Dendritic cell treated with granulocyte-macrophage colony-stimulating factor and Interleukin-4, amounts not matched to agents 40 ng/mL and 50 ng/mL, for 4 days (primary cell): ENCODE measurements at regions of chr15 and their contacts with region 1.

Region 1: DNA sequence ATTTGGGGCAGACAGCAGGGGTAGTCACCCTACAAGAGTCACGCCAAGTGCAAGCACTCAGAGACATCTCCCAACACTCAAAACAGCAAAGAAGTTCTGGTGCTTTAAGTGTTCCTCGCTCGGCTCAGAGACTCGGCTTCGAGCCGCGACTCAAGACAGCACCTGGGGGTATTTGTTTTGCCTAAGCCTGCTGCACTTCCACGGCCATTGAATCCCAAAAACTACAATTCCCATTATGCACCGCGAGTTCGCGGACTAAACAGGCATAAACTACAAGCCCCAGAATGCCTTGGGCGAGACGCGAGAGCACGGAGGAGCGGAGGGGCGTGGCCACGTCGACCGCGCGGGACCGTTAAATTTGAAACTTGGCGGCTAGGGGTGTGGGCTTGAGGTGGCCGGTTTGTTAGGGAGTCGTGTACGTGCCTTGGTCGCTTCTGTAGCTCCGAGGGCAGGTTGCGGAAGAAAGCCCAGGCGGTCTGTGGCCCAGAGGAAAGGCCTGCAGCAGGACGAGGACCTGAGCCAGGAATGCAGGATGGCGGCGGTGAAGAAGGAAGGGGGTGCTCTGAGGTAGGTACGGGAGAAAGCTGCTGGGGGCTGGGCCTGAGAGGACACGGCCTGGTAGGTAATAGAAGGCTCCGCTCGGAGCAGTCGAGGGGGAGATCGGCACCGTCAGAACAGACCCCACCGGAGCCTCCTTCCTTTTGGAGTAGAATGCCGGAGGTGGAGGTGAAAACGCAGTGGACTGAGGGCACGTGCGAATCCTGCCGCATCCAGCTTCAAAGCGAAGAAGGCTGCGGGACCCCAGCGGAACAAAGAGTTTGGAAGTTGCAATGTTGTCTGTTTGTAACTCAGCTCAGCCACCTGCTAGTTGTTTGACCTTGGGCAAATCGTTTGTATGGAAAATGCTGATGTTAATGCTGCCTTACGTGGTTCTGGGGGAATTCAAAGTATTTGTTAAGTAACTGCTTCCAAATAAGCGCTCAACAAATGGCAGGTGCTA is at the start of gene BUB1B:
- H3K4me3 Mint-ChIP-seq: no peak within 1 kb of the TSS
- H3K27ac Mint-ChIP-seq: no peak within 1 kb of the TSS
- H3K4me1 Mint-ChIP-seq: peaks cover 17% of the 10 kb centered on the region
- H3K27me3 Mint-ChIP-seq: no peaks in the 10 kb centered on the region

Region 2: DNA sequence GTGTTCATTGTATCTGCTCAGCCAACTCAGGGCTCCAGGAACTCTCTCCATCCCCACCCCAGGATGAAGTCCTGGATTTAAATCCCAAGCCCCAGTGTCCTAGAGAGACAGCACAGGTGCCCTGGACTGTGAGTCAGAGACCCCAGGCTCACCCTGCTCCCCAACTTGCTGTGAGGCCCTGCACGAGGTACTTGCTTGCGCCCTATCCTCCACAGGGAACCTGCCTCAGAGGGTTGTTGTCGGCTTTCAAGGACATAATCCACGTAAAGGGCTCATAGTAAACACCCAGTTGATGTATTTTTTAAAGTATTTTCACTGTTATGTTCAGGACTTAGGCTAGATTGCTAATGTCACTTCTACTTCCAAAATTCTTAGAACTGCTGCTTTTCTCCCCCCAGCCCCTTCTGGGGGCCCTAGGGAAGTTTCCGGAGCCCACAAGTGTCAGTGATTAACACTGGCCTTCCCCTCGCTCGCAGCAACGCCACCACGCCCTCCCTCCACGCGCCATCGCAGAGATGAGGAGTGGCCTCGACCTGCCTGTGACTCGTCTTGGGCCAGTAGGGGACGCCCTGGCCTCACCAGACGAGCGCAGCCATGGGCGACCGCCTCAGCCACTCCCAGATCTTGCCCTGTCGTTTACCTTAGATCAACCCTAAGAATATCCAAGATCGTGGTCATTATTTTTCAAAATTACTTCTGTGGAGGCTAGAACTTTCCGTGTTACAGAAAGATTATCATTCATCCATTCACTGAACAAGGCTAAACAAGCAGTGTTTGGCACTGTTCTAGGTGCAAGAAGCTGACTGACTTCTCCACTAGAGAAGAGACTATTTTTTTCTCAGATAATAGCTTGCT is 116.0 kb before region 1 on chr15:
- intact Hi-C with region 1: loop called (anchors 5 kb)
- H3K4me3 Mint-ChIP-seq: peak overlapping the region; percentile 70
- H3K27ac Mint-ChIP-seq: peak overlapping the region; percentile 74
- H3K4me1 Mint-ChIP-seq: peaks cover 61% of the 10 kb centered on the region
- H3K27me3 Mint-ChIP-seq: no peaks in the 10 kb centered on the region

Region 3: DNA sequence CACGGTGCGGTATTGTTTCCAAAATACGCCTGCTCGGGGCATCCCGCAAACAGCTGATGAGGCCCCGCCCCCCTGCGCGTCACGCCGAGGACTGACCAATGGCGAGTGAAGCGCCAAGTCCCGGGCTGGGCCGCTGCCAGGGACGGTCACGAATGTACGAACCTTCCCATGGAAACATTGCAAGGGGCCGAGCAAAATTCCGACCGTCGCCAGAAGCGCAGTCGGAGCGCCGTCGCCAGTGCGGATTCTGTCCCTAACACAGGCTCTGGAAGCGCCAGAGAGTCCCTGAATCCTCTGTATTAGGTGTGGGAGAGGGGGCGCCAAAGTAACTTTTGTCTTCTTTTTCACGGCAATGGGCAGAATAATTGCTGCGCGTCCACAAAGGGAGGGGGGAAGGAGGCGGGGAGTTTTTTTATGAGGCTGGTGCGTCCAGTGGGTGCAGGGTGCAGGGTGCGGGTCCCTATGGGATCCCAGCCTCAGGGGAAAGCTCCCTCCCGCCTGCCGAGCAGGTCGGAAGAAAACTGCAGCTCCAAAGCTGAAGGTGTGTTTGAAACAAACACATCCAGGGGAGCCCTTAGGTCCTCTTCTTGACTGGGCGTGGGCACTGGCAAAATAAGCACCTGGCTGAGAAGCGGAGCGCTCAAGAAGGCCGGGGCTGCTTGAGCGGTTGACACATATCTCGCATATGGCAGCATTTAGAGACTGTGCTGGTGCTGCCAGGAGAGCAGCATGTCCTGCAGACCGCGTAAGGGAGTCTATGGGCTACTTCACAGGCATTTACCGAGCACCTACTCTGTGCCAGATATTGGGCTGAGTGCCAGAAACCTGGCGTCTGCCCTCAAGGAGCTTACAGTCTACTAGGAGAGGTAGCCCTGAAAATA is 51.9 kb before region 1 on chr15 and contains the start of gene BMF:
- intact Hi-C with region 1: loop called (anchors 5 kb)
- H3K4me3 Mint-ChIP-seq: peak within 1 kb of the TSS; percentile 91
- H3K27ac Mint-ChIP-seq: peak within 1 kb of the TSS; percentile 87
- H3K4me1 Mint-ChIP-seq: peaks cover 52% of the 10 kb centered on the region
- H3K27me3 Mint-ChIP-seq: no peaks in the 10 kb centered on the region